ENCODE measurements at regions of chr5 and their contacts with region 1.

Region 1: GRCh38 chr5:136769900-136770684 is 404.7 kb upstream of the TRPC7 start:
- DNase-seq: peak; percentile 48
- ATAC-seq: peak; percentile 92
- H3K4me3 ChIP-seq: no peak overlapping the region
- H3K27ac ChIP-seq: no peak overlapping the region
- H3K4me1 ChIP-seq: no peaks in the 10 kb centered on the region
- H3K27me3 ChIP-seq: peaks cover 10% of the 10 kb centered on the region
- CTCF ChIP-seq: peak; percentile 91

Region 2: DNA sequence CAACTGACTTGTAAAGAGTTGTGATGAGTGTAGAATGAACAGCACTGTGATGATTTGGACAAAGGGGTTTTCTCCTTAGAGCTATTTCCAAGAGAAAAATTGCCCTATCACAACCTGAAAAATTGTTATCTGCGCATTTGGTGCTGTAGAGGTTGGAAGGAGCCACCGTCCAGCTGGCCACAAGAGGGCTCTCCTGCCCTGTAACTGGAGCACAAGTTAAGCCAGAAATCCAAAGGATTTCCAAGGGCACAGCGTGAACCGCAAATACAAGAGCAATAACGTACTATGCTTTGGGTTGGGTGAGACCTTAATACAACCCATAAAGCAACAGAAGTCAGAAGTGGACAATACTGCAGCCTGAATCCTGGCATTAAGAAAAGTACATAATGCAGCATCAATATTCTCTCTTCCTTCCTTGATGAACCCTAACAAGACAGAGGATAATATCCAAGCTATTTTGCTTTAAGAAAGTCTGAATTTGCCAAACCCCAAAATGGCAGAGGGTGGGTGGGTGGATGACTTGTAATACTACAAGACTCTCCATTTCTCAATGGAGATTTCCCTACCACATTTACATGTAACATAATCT is 520.3 kb before region 1 on chr5:
- CTCF ChIA-PET with region 1: interaction called, 4 read pairs
- POLR2A ChIA-PET with region 1: no interaction called
- in situ Hi-C with region 1: no loop called
- intact Hi-C with region 1: loop called (anchors 1 kb)
- DNase-seq: peak; percentile 43
- ATAC-seq: peak; percentile 93
- H3K4me3 ChIP-seq: no peak overlapping the region
- H3K27ac ChIP-seq: no peak overlapping the region
- H3K4me1 ChIP-seq: no peaks in the 10 kb centered on the region
- H3K27me3 ChIP-seq: peaks cover 2% of the 10 kb centered on the region; the same call in 1 of the 2 replicates
- CTCF ChIP-seq: peak; percentile 94

Region 3: DNA sequence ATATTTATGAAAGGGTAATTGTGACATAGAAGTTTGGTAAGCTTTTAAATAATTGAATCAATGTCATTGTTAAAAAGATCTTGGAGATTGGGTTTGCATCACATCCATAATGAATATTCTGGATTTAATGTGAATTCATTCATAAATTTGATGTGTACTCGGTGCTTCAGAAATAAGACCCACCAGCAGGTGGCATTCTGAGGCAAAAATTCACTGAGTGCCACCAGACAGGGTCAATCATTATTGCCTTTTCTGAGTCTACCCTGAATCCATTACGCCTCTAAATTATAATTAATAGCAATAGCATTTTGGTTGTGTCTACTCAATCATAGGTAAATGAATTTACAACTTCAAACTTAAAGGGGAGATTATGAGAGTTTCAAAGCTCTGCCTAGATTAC is 405.8 kb before region 1 on chr5:
- CTCF ChIA-PET with region 1: interaction called, 6 read pairs
- POLR2A ChIA-PET with region 1: no interaction called
- in situ Hi-C with region 1: no loop called
- intact Hi-C with region 1: loop called (anchors 1 kb)
- DNase-seq: no peak
- ATAC-seq: no peak; the same call in 1 of the 2 replicates
- H3K4me3 ChIP-seq: no peak overlapping the region
- H3K27ac ChIP-seq: no peak overlapping the region
- H3K4me1 ChIP-seq: no peaks in the 10 kb centered on the region
- H3K27me3 ChIP-seq: peaks cover 5% of the 10 kb centered on the region; the same call in 1 of the 2 replicates
- CTCF ChIP-seq: peak; percentile 56; the same call in 1 of the 2 replicates

Region 4: GRCh38 chr5:136559651-136560050 is 210.4 kb before region 1 on chr5:
- CTCF ChIA-PET with region 1: interaction called, 3 read pairs
- POLR2A ChIA-PET with region 1: no interaction called
- in situ Hi-C with region 1: no loop called
- intact Hi-C with region 1: loop called (anchors 10 kb)
- DNase-seq: no peak
- ATAC-seq: no peak
- H3K4me3 ChIP-seq: no peak overlapping the region
- H3K27ac ChIP-seq: no peak overlapping the region
- H3K4me1 ChIP-seq: no peaks in the 10 kb centered on the region
- H3K27me3 ChIP-seq: no peaks in the 10 kb centered on the region
- CTCF ChIP-seq: no peak

Region 5: DNA sequence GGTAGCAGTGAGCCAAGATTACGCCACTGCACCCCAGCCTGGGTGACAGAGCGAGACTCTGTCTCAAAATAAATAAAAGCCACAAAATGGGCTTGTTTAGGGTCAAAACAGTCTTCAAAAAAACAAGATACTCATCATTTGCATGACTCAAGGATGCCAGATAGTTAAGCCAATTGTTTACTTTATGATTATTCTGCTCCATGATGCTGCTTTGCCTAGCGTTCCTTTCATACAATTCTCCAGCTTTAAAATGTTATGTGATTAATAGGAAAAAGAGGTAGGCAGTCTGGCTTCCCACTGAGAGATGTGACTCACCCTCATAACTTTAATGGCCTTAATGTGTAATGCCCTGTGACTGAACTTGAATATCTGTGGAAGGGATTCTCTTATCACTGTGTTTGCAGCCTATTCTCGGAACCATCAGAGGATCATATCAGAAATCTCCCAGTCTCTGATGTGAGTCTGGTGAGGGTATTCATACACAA is 40.1 kb before region 1 on chr5:
- CTCF ChIA-PET with region 1: no interaction called
- POLR2A ChIA-PET with region 1: no interaction called
- in situ Hi-C with region 1: no loop called
- intact Hi-C with region 1: no loop called
- DNase-seq: peak; percentile 71
- ATAC-seq: peak; percentile 89
- H3K4me3 ChIP-seq: no peak overlapping the region
- H3K27ac ChIP-seq: no peak overlapping the region
- H3K4me1 ChIP-seq: no peaks in the 10 kb centered on the region; the same call in 1 of the 2 replicates
- H3K27me3 ChIP-seq: no peaks in the 10 kb centered on the region
- CTCF ChIP-seq: no peak